B cell (primary cell): ENCODE measurements at regions of chr1 and their contacts with region 1.

Region 1: GRCh38 chr1:6613361-6614018 is at the start of gene PHF13:
- DNase-seq: peak; percentile 99
- ATAC-seq: peak; percentile 93
- H3K4me3 ChIP-seq: peak within 1 kb of the TSS; percentile 64 to 94 (median 77)
- H3K4me3 Mint-ChIP-seq: peak within 1 kb of the TSS; percentile 92
- H3K27ac ChIP-seq: peak within 1 kb of the TSS; percentile 7 to 77
- H3K27ac Mint-ChIP-seq: peak within 1 kb of the TSS; percentile 91
- H3K4me1 ChIP-seq: peaks cover 11 to 14% of the 10 kb centered on the region in 2 donors
- H3K4me1 Mint-ChIP-seq: peaks cover 17% of the 10 kb centered on the region
- H3K27me3 ChIP-seq: no peaks in the 10 kb centered on the region
- H3K27me3 Mint-ChIP-seq: no peaks in the 10 kb centered on the region
- CTCF ChIP-seq: no peak
- total RNA-seq, gene PHF13: 10.6 and 11.0 TPM in 2 replicates

Region 2: DNA sequence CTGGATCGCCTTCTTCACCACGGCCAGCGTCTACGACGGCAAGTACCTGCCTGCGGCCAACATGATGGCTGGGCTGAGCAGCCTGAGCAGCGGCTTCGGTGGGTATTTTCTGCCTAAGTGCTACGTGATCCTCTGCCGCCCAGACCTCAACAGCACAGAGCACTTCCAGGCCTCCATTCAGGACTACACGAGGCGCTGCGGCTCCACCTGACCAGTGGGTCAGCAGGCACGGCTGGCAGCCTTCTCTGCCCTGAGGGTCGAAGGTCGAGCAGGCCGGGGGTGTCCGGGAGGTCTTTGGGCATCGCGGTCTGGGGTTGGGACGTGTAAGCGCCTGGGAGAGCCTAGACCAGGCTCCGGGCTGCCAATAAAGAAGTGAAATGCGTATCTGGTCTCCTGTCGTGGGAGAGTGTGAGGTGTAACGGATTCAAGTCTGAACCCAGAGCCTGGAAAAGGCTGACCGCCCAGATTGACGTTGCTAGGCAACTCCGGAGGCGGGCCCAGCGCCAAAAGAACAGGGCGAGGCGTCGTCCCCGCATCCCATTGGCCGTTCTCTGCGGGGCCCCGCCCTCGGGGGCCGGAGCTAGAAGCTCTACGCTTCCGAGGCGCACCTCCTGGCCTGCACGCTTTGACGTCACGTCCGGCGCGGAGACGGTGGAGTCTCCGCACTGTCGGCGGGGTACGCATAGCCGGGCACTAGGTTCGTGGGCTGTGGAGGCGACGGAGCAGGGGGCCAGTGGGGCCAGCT is 33.9 kb before region 1 on chr1 and contains the start of gene ZBTB48:
- CTCF ChIA-PET with region 1: no interaction called
- POLR2A ChIA-PET with region 1: interaction called, 4 read pairs
- intact Hi-C with region 1: loop called (anchors 1 kb)
- DNase-seq: peak; percentile 97
- ATAC-seq: peak; percentile 97
- H3K4me3 ChIP-seq: peak within 1 kb of the TSS; percentile 30 to 91 (median 88)
- H3K4me3 Mint-ChIP-seq: peak within 1 kb of the TSS; percentile 98
- H3K27ac ChIP-seq: peak within 1 kb of the TSS; percentile 87 to 91
- H3K27ac Mint-ChIP-seq: peak within 1 kb of the TSS; percentile 98
- H3K4me1 ChIP-seq: peaks cover 20 to 32% of the 10 kb centered on the region in 2 donors
- H3K4me1 Mint-ChIP-seq: peaks cover 34% of the 10 kb centered on the region
- H3K27me3 ChIP-seq: no peaks in the 10 kb centered on the region
- H3K27me3 Mint-ChIP-seq: no peaks in the 10 kb centered on the region
- CTCF ChIP-seq: no peak
- total RNA-seq, gene ZBTB48: 65.6 and 79.0 TPM in 2 replicates